ENCODE measurements at regions of chr13 and their contacts with region 1.

Region 1: DNA sequence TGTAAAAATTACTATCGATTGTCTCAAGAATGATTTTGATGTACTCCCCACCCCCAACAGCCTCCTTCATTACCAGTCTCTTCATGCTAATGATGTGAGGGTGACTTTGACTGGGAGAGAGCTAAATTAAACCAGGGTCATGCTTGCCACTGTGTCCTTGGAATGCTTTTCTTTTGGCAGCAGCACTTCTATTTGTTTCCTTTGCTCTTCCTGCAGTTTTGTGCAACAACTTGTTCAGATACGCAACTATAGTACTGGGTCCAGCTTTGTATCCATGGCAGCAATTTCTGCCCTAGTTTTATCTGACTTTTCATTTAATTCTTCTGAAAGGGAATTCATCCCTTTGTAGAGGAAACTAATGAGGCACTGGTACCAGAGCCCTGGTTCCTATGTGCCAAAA is 2792.1 kb downstream of the PCDH9 start:
- DNase-seq: no peak
- H3K4me3 ChIP-seq: no peak overlapping the region
- H3K27ac ChIP-seq: no peak overlapping the region
- H3K4me1 ChIP-seq: no peaks in the 10 kb centered on the region
- H3K27me3 ChIP-seq: no peaks in the 10 kb centered on the region
- CTCF ChIP-seq: no peak
- POLR2A ChIP-seq: no peak

Region 2: GRCh38 chr13:63425131-63425530 is 1013.0 kb before region 1 on chr13:
- intact Hi-C with region 1: loop called (anchors 5 kb)
- DNase-seq: no peak
- H3K4me3 ChIP-seq: no peak overlapping the region
- H3K27ac ChIP-seq: no peak overlapping the region
- H3K4me1 ChIP-seq: no peaks in the 10 kb centered on the region
- H3K27me3 ChIP-seq: no peaks in the 10 kb centered on the region
- CTCF ChIP-seq: no peak
- POLR2A ChIP-seq: no peak

Region 3: GRCh38 chr13:64453831-64454230 is 15.7 kb after region 1 on chr13:
- intact Hi-C with region 1: no loop called
- DNase-seq: no peak
- H3K4me3 ChIP-seq: no peak overlapping the region
- H3K27ac ChIP-seq: no peak overlapping the region
- H3K4me1 ChIP-seq: no peaks in the 10 kb centered on the region
- H3K27me3 ChIP-seq: no peaks in the 10 kb centered on the region
- CTCF ChIP-seq: no peak
- POLR2A ChIP-seq: no peak

Measured in breast epithelium (tissue), 4 donors.